T-cell (primary cell): ENCODE measurements at regions of chr4 and their contacts with region 1.

Region 1: GRCh38 chr4:17595471-17596005 is 18.5 kb downstream of the LAP3 start:
- DNase-seq: no peak
- ATAC-seq: no peak
- H3K4me3 ChIP-seq: no peak overlapping the region
- H3K4me3 Mint-ChIP-seq: no peak overlapping the region
- H3K27ac ChIP-seq: no peak overlapping the region
- H3K27ac Mint-ChIP-seq: no peak overlapping the region
- H3K4me1 ChIP-seq: no peaks in the 10 kb centered on the region
- H3K4me1 Mint-ChIP-seq: peaks cover 0 to 14% (median 4%) of the 10 kb centered on the region in 3 donors
- H3K27me3 ChIP-seq: no peaks in the 10 kb centered on the region
- H3K27me3 Mint-ChIP-seq: no peaks in the 10 kb centered on the region

Region 2: GRCh38 chr4:17414392-17414791 is 181.1 kb before region 1 on chr4:
- CTCF ChIA-PET with region 1: no interaction called
- POLR2A ChIA-PET with region 1: no interaction called
- DNase-seq: no peak
- ATAC-seq: no peak
- H3K4me3 ChIP-seq: no peak overlapping the region
- H3K4me3 Mint-ChIP-seq: no peak overlapping the region
- H3K27ac ChIP-seq: no peak overlapping the region
- H3K27ac Mint-ChIP-seq: no peak overlapping the region
- H3K4me1 ChIP-seq: no peaks in the 10 kb centered on the region
- H3K4me1 Mint-ChIP-seq: no peaks in the 10 kb centered on the region
- H3K27me3 ChIP-seq: no peaks in the 10 kb centered on the region
- H3K27me3 Mint-ChIP-seq: peaks cover 5 to 27% of the 10 kb centered on the region in 2 donors

Region 3: GRCh38 chr4:17576932-17577665 is 18.4 kb before region 1 on chr4 and contains the start of gene LAP3:
- CTCF ChIA-PET with region 1: no interaction called
- POLR2A ChIA-PET with region 1: interaction called in 1 of 2 experiments, 14 read pairs
- DNase-seq: peak; percentile 93 to 100 (median 98)
- ATAC-seq: peak; percentile 90 to 94 (median 93)
- H3K4me3 ChIP-seq: peak within 1 kb of the TSS; percentile 72 to 91
- H3K4me3 Mint-ChIP-seq: peak within 1 kb of the TSS; percentile 85 to 93 (median 89)
- H3K27ac ChIP-seq: peak within 1 kb of the TSS; percentile 85
- H3K27ac Mint-ChIP-seq: peak within 1 kb of the TSS; percentile 92 to 98
- H3K4me1 ChIP-seq: peaks cover 9 to 27% of the 10 kb centered on the region in 2 experiments
- H3K4me1 Mint-ChIP-seq: peaks cover 27 to 33% (median 28%) of the 10 kb centered on the region in 3 donors
- H3K27me3 ChIP-seq: no peaks in the 10 kb centered on the region
- H3K27me3 Mint-ChIP-seq: no peaks in the 10 kb centered on the region
- total RNA-seq, gene LAP3: 23.5 to 58.4 (median 25.1) TPM

Region 4: GRCh38 chr4:17614416-17615299 is 19.1 kb after region 1 on chr4 and contains the start of gene MED28:
- CTCF ChIA-PET with region 1: interaction called in 1 of 2 experiments, 3 read pairs
- POLR2A ChIA-PET with region 1: interaction called, 3 to 10 read pairs
- DNase-seq: peak; percentile 84 to 98 (median 93)
- ATAC-seq: peak; percentile 91 to 96 (median 95)
- H3K4me3 ChIP-seq: peak within 1 kb of the TSS; percentile 94 to 100
- H3K4me3 Mint-ChIP-seq: peak within 1 kb of the TSS; percentile 95 to 100 (median 99)
- H3K27ac ChIP-seq: peak within 1 kb of the TSS; percentile 82
- H3K27ac Mint-ChIP-seq: peak within 1 kb of the TSS; percentile 99 to 100
- H3K4me1 ChIP-seq: peaks cover 27 to 59% of the 10 kb centered on the region in 2 experiments
- H3K4me1 Mint-ChIP-seq: peaks cover 51 to 55% (median 53%) of the 10 kb centered on the region in 3 donors
- H3K27me3 ChIP-seq: no peaks in the 10 kb centered on the region
- H3K27me3 Mint-ChIP-seq: no peaks in the 10 kb centered on the region
- total RNA-seq, gene MED28: 50.6 to 75.5 (median 66.2) TPM